Activated CD4-positive, alpha-beta T cell treated with anti-CD3 and anti-CD28 coated beads for 36 hours (primary cell): ENCODE measurements at regions of chr4 and their contacts with region 1.

Region 1: DNA sequence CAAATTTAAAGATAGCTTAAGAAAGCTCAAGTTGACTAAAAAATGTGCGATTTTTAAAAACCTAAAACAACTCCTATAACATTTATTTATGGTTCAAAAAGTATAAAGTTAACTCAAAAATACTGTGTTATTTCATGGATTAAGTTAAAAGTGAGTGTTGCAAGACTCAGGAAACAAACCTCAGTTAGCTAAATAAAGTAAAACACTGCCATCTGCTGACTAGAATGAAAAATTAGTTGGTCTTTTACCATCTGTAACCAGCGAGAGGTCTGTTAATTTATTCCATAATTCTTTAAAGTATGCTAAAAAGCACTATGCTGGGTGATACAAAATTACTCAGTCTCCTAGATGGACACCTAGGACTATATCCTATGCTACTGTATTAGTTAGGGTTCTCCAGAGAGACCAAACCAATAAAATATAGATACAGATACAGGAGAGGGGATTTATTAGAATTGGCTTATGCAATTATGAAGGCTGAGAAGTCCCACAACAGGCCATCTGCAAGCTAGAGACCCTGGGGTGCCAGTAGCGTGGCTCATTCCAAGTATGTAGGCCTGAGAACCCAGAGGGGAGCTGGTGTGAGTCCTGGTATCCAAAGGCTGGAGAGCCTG is 4.9 kb upstream of the WDFY3 start:
- DNase-seq: no peak
- ATAC-seq: no peak
- H3K4me3 Mint-ChIP-seq: no peak overlapping the region
- H3K27ac Mint-ChIP-seq: no peak overlapping the region
- H3K4me1 Mint-ChIP-seq: peaks cover 8% of the 10 kb centered on the region
- H3K27me3 Mint-ChIP-seq: peaks cover 41% of the 10 kb centered on the region

Region 2: DNA sequence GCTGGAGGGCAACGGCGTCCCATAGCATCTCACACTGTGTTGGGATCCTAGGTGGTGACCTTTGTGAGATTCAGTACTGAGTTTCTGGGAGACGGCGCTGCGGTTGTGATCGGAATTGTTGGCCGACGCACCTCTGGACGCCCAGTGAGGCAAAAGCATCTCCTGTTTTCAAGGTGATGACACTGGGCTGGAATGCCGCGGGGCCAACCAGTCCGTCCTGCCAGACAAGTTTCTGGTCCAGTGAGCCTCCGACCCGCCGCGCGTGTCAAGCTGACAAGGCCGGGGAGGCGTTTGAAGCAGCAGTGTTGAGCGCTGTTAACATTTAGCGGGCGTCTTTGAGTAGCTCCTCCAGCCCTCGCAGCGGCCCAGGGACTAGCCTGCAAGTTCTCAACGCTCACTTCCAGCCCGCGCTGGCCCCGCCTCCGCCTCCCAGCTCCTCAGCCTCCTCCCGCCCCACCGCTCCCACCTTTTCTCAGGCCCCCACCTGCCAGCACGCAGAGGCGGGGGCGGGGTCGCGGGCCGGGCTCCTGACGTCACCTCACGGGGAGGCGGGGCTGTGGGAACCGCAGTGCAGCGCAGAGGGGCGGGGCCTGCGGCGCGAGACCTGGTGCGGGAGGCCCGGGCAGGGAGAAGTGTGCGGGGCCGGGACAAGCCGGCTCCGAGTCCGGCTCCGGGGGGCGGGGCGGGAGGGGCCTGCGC is 389.0 kb before region 1 on chr4:
- CTCF ChIA-PET with region 1: interaction called, 14 read pairs
- POLR2A ChIA-PET with region 1: no interaction called
- intact Hi-C with region 1: loop called in 1 of 2 experiments (anchors 1 kb)
- DNase-seq: peak; percentile 93
- ATAC-seq: peak; percentile 79
- H3K4me3 Mint-ChIP-seq: peak overlapping the region; percentile 68
- H3K27ac Mint-ChIP-seq: no peak overlapping the region
- H3K4me1 Mint-ChIP-seq: peaks cover 15% of the 10 kb centered on the region
- H3K27me3 Mint-ChIP-seq: peaks cover 46% of the 10 kb centered on the region

Region 3: DNA sequence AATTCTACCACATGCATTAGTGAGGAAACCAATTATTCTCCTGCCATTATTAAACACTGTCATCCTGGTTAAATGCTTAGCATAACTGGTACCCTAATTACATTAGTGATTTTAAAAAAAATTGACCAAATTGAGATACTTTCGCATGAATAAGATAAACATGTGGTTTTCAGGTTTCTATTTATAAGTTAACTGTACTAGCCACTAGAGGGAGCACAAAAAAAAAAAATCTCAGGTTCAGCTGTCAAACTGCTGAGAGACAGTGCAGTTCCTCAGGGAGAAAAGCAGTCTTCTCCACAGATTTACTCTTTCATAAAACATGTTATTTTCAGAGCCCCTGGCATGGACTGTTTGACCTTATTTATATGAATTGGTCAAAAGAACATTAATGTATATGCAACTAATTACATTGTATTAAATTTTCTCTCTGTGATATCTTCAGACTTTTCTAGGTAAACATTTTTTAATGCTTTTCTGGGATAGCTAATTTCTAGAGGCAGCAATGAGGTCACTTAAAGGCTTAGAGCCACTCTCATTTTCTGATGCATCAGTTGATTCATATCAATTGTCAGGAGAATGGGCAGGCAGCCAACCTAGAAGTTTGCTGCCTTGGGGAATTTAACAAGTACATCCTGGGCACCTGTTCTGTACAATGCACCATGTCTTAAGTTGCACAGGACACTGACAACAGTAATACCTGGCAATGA is 221.0 kb before region 1 on chr4:
- CTCF ChIA-PET with region 1: interaction called, 21 read pairs
- POLR2A ChIA-PET with region 1: no interaction called
- intact Hi-C with region 1: loop called (anchors 1 kb)
- DNase-seq: no peak
- ATAC-seq: no peak
- H3K4me3 Mint-ChIP-seq: no peak overlapping the region
- H3K27ac Mint-ChIP-seq: no peak overlapping the region
- H3K4me1 Mint-ChIP-seq: no peaks in the 10 kb centered on the region
- H3K27me3 Mint-ChIP-seq: peaks cover 2% of the 10 kb centered on the region